ENCODE measurements at regions of chr4 and their contacts with region 1.

Region 1: DNA sequence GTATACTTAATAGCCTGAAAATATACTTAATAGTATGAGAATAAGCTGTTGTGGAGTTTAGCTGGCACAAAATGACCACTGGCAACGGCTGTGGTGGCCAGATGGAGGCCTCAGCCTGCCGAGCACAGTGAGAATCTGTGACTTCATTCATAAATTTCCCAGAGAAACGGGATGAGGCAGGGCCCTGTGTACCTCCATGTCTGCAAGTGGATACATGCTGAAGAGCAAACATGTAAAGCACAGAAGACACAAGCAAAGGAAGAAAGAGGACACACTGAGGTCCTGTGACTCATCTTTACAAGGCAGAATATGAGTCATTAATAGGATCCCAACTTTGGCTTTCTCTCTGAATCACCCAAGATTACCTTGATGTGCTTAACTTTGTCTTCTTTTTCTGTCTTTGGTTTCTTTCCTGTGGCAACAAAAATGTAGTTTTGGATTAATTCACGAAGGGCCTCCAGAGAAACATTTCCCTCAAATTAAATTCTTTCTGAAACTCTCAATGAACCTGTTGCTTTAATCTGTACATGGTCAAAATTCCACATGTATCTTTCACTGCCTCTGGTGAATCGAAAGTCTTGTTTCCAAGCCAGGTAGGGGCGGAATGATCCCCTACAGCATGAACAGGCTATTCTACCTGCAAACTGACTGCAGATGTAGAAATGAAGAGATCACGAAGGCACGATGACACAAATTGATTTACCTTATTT is 56.4 kb downstream of the IRF2 start:
- DNase-seq: peak; percentile 78
- ATAC-seq: peak; percentile 72
- H3K4me3 ChIP-seq: no peak overlapping the region
- H3K27ac ChIP-seq: peak overlapping the region; percentile 90
- H3K4me1 ChIP-seq: peaks cover 64% of the 10 kb centered on the region
- H3K27me3 ChIP-seq: no peaks in the 10 kb centered on the region
- CTCF ChIP-seq: no peak
- EP300 ChIP-seq: peak in 1 of 2 experiments; percentile 75; a peak in 1 of 4 replicates
- POLR2A ChIP-seq: 0 out of 2 replicates have a peak, but pooled peaks have one; percentile 23
- RAD21 ChIP-seq: no peak

Region 2: DNA sequence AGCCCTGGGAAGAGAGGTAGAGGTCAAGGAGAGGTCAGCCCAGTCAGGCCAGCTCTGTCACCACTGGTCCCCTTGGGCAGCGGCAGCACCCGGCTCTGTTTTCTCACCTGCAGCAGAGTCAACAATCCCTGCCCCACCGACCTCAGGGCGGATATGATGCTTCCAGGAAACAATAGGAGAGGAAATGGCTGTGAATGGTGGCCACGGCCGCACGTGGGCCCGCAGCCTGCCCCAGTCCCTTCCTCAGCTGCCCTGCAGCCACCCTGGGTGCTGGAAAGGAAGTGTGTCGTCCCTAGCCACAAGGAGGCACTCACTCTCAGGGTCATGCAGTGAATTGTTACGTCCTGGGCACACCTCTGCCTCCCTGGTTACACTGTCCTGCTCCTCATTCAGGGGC is 107.8 kb before region 1 on chr4:
- CTCF ChIA-PET with region 1: no interaction called
- POLR2A ChIA-PET with region 1: no interaction called
- RAD21 ChIA-PET with region 1: interaction called, 6 read pairs
- SMC1A ChIA-PET with region 1: interaction called, 8 read pairs
- in situ Hi-C with region 1: no loop called
- intact Hi-C with region 1: loop called (anchors 2 kb)
- DNase-seq: no peak
- ATAC-seq: peak; percentile 61
- H3K4me3 ChIP-seq: peak overlapping the region; percentile 75; the same call in 1 of the 2 replicates
- H3K27ac ChIP-seq: peak overlapping the region; percentile 94
- H3K4me1 ChIP-seq: peaks cover 47% of the 10 kb centered on the region
- H3K27me3 ChIP-seq: no peaks in the 10 kb centered on the region
- CTCF ChIP-seq: peak; percentile 49 to 59 (median 49)
- EP300 ChIP-seq: no peak
- POLR2A ChIP-seq: peak; percentile 33; the same call in 1 of the 2 replicates
- RAD21 ChIP-seq: peak; percentile 65

Region 3: GRCh38 chr4:184343502-184344177 is 74.3 kb before region 1 on chr4:
- CTCF ChIA-PET with region 1: interaction called, 4 read pairs
- POLR2A ChIA-PET with region 1: interaction called, 23 read pairs
- RAD21 ChIA-PET with region 1: interaction called, 19 read pairs
- SMC1A ChIA-PET with region 1: interaction called, 22 read pairs
- in situ Hi-C with region 1: no loop called
- intact Hi-C with region 1: no loop called
- DNase-seq: peak; percentile 69
- ATAC-seq: peak; percentile 51
- H3K4me3 ChIP-seq: peak overlapping the region; percentile 55
- H3K27ac ChIP-seq: peak overlapping the region; percentile 86
- H3K4me1 ChIP-seq: peaks cover 52% of the 10 kb centered on the region
- H3K27me3 ChIP-seq: no peaks in the 10 kb centered on the region
- CTCF ChIP-seq: no peak
- EP300 ChIP-seq: peak in 1 of 2 experiments; percentile 14; a peak in 1 of 4 replicates
- POLR2A ChIP-seq: peak; percentile 72
- RAD21 ChIP-seq: no peak

Region 4: DNA sequence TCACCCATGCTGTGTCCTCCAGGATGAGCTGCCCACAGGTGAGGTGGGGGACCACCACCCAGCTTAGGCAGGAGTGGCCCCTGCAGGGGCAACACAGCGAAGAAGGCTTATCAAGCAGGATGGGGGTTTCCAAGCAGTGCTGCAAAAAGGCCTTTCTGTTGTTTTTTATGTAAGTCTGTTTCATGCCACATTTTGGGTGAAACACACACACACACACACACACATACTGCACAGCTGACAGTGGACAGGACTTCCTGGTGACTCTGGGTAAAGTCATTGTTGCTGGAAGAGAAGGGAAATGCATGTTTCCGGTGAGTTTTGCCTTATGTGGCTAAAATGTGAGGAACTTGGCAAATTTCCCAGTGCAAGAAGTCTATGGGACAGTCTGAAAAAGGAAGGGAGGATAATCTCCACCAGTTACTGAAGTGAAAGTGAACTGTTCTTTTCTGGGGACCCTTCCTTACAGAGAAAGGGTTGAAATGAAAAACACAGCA is 62.8 kb before region 1 on chr4:
- CTCF ChIA-PET with region 1: interaction called, 11 read pairs
- POLR2A ChIA-PET with region 1: interaction called, 31 read pairs
- RAD21 ChIA-PET with region 1: interaction called, 51 read pairs
- SMC1A ChIA-PET with region 1: interaction called, 48 read pairs
- in situ Hi-C with region 1: no loop called
- intact Hi-C with region 1: loop called (anchors 1 kb)
- DNase-seq: peak; percentile 84
- ATAC-seq: peak; percentile 15
- H3K4me3 ChIP-seq: no peak overlapping the region
- H3K27ac ChIP-seq: peak overlapping the region; percentile 99
- H3K4me1 ChIP-seq: peaks cover 16% of the 10 kb centered on the region
- H3K27me3 ChIP-seq: no peaks in the 10 kb centered on the region
- CTCF ChIP-seq: no peak
- EP300 ChIP-seq: peak; percentile 52 to 63; a peak in 2 of 4 replicates
- POLR2A ChIP-seq: no peak
- RAD21 ChIP-seq: peak; percentile 28

Region 5: GRCh38 chr4:184395971-184396391 is 22.0 kb before region 1 on chr4:
- CTCF ChIA-PET with region 1: interaction called, 4 read pairs
- POLR2A ChIA-PET with region 1: interaction called, 9 read pairs
- RAD21 ChIA-PET with region 1: interaction called, 5 read pairs
- SMC1A ChIA-PET with region 1: interaction called, 15 read pairs
- in situ Hi-C with region 1: no loop called
- intact Hi-C with region 1: no loop called
- DNase-seq: peak; percentile 81
- ATAC-seq: peak; percentile 89
- H3K4me3 ChIP-seq: peak overlapping the region; percentile 29
- H3K27ac ChIP-seq: peak overlapping the region; percentile 76
- H3K4me1 ChIP-seq: peaks cover 29% of the 10 kb centered on the region
- H3K27me3 ChIP-seq: no peaks in the 10 kb centered on the region
- CTCF ChIP-seq: no peak
- EP300 ChIP-seq: no peak
- POLR2A ChIP-seq: peak; percentile 63; the same call in 1 of the 2 replicates
- RAD21 ChIP-seq: no peak

Region 6: DNA sequence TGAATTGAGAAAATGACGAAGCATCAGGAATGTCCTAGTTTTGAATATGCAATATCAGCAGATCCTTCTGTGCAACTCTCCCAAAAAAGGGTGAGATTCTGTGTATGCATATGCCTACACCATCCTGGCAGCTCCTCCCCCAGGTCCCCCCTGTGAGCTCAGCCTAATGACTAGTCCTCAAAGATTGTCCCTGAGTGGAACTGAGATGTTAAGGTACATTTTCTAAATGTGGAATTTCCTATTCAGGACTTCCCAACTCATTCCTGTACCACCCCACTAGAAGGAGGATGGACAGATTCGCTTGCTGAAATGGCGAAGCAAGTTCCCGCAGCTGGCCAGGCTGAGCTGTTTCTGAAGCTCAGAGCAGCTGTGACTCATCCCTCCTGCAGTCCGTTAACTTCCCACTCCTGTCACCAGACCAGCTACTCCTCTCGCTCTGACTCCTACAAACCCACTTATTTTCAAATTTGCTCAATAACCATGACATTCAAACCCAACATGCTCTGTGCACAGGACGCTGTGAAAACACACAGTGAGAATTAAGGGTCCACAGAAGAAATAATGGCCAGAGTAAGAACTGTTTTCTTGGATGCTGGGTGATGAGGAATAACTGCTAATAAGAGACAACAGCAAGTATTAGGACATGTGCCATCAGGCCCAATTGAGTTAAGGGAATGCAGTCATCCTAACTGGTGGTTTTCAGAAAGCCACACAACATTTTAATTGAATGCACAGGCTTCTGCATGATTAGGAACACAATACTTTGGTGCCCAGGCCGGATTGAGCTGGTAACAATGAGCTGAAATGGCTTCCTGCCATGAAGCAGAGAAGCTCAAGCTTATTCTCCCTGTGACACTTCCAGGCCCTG is 96.4 kb after region 1 on chr4:
- CTCF ChIA-PET with region 1: no interaction called
- POLR2A ChIA-PET with region 1: interaction called, 3 read pairs
- RAD21 ChIA-PET with region 1: interaction called, 19 read pairs
- SMC1A ChIA-PET with region 1: interaction called, 14 read pairs
- in situ Hi-C with region 1: no loop called
- intact Hi-C with region 1: loop called (anchors 1 kb)
- DNase-seq: peak; percentile 94
- ATAC-seq: peak; percentile 96
- H3K4me3 ChIP-seq: peak overlapping the region; percentile 42
- H3K27ac ChIP-seq: peak overlapping the region; percentile 70
- H3K4me1 ChIP-seq: peaks cover 32% of the 10 kb centered on the region
- H3K27me3 ChIP-seq: no peaks in the 10 kb centered on the region
- CTCF ChIP-seq: no peak
- EP300 ChIP-seq: peak; percentile 99 to 100
- POLR2A ChIP-seq: 0 out of 2 replicates have a peak, but pooled peaks have one; percentile 30
- RAD21 ChIP-seq: no peak

Region 7: DNA sequence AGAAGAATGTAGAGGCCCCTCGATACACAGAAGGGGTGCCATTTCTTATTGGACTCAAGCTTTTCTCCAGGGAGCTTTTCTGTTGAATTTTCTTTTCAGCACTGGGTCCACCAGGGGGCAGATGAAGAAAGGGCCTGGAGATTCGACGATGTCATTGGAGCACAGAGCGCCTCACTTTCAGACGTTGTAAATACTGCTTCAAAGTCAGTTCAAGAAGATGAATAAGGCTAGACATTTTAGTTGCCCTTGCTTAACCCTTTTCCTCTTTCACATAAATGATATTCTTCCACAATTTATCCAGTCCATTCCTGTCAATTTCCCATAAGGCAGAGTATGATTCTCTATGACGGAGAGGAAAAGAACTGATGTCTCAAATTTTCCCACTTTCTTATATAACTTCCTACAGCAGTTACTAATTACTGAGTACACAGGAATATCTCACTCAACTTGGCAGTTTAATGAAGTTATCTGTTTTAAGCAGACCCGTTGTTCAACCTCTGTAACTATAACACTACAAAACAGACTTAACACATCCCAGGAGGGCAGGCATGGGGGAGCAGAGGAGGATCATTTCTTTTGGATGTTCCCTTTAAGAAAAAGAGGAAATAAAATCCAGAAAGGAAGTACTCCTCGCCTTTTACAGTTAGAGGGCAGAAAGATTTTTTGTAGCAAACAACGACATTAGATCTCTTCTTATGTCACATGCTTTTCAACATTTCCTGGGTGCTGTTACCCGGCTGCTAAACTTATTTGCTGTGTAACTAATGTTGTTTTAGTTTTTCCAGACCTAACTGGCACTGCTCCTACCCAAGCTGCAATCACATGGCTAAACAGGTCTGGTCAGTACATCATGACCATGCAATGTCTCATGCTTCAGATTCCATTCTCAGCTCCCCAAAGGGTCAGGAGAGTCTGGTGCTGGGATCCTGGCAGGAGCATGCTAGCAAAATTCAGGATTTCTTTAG is 328.2 kb after region 1 on chr4:
- CTCF ChIA-PET with region 1: no interaction called
- POLR2A ChIA-PET with region 1: no interaction called
- RAD21 ChIA-PET with region 1: no interaction called
- SMC1A ChIA-PET with region 1: no interaction called
- in situ Hi-C with region 1: no loop called
- intact Hi-C with region 1: no loop called
- DNase-seq: no peak
- ATAC-seq: peak; percentile 89
- H3K4me3 ChIP-seq: no peak overlapping the region
- H3K27ac ChIP-seq: no peak overlapping the region
- H3K4me1 ChIP-seq: no peaks in the 10 kb centered on the region
- H3K27me3 ChIP-seq: no peaks in the 10 kb centered on the region
- CTCF ChIP-seq: peak; percentile 77 to 85 (median 82)
- EP300 ChIP-seq: no peak
- POLR2A ChIP-seq: no peak
- RAD21 ChIP-seq: peak; percentile 93

Measured in GM12878 (cell line).